ENCODE measurements at regions of chr5 and their contacts with region 1.

Region 1: DNA sequence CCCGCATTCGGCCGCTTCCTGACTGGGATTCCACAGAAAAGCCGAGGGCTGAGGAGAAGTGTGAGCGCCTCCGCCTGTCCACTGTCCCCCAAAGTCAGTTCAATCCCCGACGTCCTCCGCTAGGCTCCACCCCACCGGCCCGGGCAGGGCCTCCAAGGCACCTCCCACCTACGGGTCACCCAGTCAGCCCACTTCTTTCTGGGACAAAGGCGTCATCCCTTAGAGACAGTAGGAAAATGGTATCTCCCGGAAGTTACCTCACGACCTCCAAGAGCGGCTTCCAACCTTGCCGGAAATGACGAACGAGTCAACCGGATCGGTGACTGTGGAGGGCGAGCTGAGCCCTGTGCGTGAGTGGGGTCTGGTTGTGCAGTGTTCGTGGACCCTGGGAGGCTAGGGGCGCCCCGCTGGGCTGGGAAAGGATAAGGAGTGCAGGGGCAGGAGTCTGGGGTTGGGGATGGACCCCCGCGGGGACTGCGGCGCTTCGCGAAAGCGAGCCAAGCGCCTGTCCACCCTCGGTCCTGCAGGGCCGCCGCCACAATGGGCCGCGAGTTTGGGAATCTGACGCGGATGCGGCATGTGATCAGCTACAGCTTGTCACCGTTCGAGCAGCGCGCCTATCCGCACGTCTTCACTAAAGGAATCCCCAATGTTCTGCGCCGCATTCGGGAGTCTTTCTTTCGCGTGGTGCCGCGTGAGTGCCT is at the starts of genes GDF9 and UQCRQ:
- DNase-seq: peak; percentile 91 to 100 (median 98)

Region 2: DNA sequence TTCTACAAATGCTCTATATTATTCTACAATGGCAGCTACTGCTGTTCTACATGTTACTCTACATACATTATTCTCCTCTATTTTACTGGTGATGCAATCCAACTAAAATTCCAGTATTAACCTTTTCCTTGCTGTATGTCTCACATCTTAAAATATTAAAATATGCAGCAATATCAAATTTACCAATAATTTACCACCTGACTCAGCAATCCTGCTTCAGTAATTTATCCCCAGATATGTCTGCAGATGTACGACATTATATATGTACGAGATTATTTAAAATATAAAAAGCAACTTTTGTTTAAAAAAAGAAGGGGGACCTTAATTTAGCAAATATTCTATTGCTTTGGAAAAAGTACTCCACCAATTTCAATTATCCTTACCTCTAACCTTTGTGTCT is 140.7 kb before region 1 on chr5:
- intact Hi-C with region 1: no loop called
- DNase-seq: no peak

Region 3: GRCh38 chr5:132736853-132737833 is 129.4 kb before region 1 on chr5 and contains the start of gene KIF3A:
- intact Hi-C with region 1: loop called (anchors 5 kb)
- DNase-seq: peak; percentile 92 to 99 (median 97)

Region 4: DNA sequence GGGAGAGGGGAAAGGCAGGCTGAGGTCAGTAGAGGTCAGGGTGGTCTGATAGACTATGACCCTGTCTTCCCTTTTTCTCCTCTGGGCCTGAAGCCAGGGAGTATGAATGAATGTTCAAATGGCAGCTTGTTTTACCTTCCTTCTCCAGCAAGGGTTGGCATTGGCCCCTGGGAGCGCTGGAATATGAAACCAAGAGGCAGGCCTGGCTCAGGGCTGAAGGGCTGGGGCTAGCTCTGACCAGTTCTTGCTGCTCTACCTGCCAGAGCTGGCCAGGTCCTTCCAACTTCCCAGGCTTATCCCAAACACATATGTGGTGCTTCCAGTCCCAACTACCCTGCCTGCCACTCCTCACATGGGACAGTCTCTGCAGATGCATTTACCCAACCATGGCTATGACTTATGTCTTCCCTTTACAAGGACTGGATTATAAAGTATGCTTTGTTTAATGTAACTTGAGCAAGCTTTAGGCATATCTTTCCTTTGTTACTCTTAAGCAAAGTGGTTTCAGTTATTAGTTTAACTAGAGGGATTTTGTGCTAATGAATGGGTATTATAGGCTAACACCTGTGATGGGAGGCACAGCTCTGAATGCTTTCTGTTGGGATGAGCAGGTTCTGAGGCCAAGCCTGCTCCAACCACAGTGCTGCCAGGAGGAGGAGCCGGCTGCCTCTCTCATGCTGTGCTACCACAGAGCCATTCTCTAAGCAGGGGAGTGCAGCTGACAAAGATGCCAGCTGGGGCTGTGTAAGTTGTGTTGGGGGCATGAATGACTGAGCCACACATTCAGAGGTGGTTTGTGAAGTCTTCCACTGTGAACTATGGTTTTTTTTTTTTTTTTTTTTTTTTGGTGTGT is 113.1 kb before region 1 on chr5:
- intact Hi-C with region 1: loop called (anchors 5 kb)
- DNase-seq: peak; percentile 61 to 90 (median 80)

Region 5: GRCh38 chr5:132829742-132830435 is 36.6 kb before region 1 on chr5:
- intact Hi-C with region 1: loop called (anchors 5 kb)
- DNase-seq: peak in 41 of 42 donors; percentile 69 to 91 (median 82)